Thyroid gland (tissue), 4 donors: ENCODE measurements at regions of chr13 and their contacts with region 1.

Region 1: GRCh38 chr13:79538757-79539156 is 57.8 kb downstream of the NDFIP2 start:
- DNase-seq: no peak
- H3K4me3 ChIP-seq: no peak overlapping the region
- H3K27ac ChIP-seq: no peak overlapping the region
- H3K4me1 ChIP-seq: no peaks in the 10 kb centered on the region
- H3K27me3 ChIP-seq: no peaks in the 10 kb centered on the region
- CTCF ChIP-seq: no peak
- POLR2A ChIP-seq: no peak

Region 2: DNA sequence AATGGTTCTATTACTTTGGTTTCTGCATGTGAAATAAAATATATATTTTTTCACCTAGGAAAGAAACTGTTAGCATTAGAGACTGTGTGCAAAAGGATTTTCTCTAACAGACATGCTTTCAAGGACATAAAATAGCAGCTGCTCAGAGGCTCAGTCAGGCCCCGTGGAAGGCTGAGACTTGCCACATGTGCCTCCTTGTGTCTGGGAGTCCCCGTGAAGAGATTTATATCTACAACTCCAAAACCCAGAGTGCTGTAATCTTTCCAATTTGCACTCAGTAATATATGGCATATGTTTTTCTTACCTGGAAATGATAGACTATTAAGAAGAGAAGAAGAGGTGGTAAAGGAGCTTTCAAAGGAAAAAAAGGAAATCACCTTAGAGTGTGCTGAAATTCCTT is 508.2 kb before region 1 on chr13:
- intact Hi-C with region 1: no loop called
- DNase-seq: no peak
- H3K4me3 ChIP-seq: no peak overlapping the region
- H3K27ac ChIP-seq: no peak overlapping the region
- H3K4me1 ChIP-seq: no peaks in the 10 kb centered on the region
- H3K27me3 ChIP-seq: no peaks in the 10 kb centered on the region
- CTCF ChIP-seq: no peak
- POLR2A ChIP-seq: no peak

Region 3: DNA sequence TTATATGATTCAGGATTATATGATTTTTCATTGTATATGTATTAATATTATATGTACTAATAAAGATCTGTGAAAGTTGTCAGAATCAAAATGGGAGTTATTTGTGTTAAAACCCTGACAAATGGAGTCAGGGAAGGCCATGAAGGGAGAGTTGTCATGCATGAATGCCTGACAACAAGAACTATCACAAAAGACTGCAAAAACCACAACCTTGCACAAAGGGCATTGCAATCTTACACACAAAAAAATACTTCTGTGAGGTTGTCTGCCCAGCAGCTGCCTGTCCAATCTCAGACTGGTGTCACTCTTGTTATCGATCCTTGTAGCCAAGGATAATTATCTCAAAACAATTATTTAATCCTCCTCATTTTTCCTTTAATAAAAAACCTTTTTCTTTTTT is 111.5 kb before region 1 on chr13:
- intact Hi-C with region 1: loop called (anchors 5 kb)
- DNase-seq: no peak
- H3K4me3 ChIP-seq: no peak overlapping the region
- H3K27ac ChIP-seq: no peak overlapping the region
- H3K4me1 ChIP-seq: no peaks in the 10 kb centered on the region
- H3K27me3 ChIP-seq: no peaks in the 10 kb centered on the region
- CTCF ChIP-seq: no peak
- POLR2A ChIP-seq: no peak

Region 4: DNA sequence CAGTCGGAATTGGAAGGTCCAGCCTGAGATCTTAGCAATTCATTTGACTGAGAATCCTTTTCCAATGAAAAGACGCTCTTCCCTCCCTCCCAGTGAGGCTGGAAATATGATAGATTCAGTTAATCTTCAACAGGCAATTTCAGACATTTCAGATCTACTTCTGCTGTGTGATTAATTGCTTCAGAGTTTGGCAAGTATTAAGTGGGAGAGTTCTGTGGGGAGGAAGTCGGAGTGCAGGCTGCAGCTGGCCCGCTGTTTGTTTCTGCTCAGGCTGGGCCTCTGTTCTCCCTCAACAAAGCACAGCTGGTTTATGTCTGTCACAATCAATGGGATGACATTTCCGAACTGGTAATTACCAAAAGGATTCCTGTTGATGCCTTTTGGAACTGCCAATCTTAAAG is 120.4 kb after region 1 on chr13:
- intact Hi-C with region 1: no loop called
- DNase-seq: no peak
- H3K4me3 ChIP-seq: no peak overlapping the region
- H3K27ac ChIP-seq: no peak overlapping the region
- H3K4me1 ChIP-seq: no peaks in the 10 kb centered on the region
- H3K27me3 ChIP-seq: no peaks in the 10 kb centered on the region
- CTCF ChIP-seq: no peak
- POLR2A ChIP-seq: no peak